Mammary epithelial cell (primary cell): ENCODE measurements at regions of chr2 and their contacts with region 1.

Region 1: GRCh38 chr2:237744613-237745249 is 53.8 kb upstream of the RBM44 start:
- DNase-seq: peak; percentile 32
- H3K4me3 ChIP-seq: no peak overlapping the region
- H3K27ac ChIP-seq: no peak overlapping the region
- H3K4me1 ChIP-seq: no peaks in the 10 kb centered on the region
- H3K27me3 ChIP-seq: no peaks in the 10 kb centered on the region
- CTCF ChIP-seq: peak; percentile 94 to 98

Region 2: GRCh38 chr2:237322564-237322963 is 422.2 kb before region 1 on chr2:
- CTCF ChIA-PET with region 1: no interaction called
- dilution Hi-C with region 1: no loop called
- in situ Hi-C with region 1: no loop called
- intact Hi-C with region 1: no loop called
- DNase-seq: no peak
- H3K4me3 ChIP-seq: no peak overlapping the region
- H3K27ac ChIP-seq: no peak overlapping the region
- H3K4me1 ChIP-seq: no peaks in the 10 kb centered on the region
- H3K27me3 ChIP-seq: no peaks in the 10 kb centered on the region
- CTCF ChIP-seq: peak; percentile 78

Region 3: DNA sequence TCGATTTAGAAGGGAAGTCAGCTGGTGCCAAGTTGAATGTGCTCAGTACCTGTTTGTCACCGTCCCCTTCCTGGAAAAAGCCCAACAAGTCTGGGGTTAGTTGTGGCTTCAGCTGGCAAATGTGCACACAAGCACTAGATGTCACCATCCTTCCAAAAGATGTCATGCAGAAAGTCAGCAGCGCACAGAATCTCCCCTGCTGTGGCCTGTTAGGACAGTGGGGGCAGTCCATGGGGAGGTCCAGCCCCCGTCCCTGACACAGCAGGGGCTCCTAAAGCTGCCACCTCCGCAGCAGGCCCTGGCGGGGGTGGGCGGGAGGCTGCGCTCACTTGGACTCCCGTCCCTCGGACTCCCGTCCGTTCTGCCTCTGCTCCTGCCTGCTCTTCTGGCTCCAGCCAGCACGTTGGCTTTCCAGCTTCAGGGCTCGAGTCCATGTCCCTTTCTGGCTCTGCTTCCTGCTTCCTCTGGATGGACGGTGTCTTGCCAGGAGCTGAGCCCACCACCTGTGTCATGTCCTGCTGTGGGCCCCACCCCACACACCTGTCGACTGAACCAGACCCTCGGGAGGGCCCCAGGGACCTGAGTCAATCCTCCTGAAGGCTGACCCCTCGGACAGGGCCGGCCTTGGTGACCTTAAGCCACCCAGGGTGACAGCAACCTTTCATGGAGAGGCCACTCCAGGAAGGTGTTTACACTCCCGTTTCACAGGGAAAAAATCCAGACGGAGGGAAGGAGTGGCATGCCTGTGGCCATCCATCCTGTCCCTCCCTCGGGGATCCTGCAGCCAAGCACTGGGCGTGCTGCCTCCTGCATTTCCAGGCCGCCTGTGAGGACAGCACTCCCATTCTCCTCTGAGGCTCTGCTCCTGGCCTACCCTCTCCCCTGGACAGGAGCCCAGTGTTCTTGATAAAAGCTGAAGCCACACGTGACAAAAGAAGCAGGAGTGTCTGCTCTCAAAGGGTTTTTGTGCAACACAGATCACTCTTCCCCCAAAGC is 162.7 kb before region 1 on chr2:
- CTCF ChIA-PET with region 1: no interaction called
- dilution Hi-C with region 1: no loop called
- in situ Hi-C with region 1: loop called in 1 of 2 experiments (anchors 25 kb)
- intact Hi-C with region 1: no loop called
- DNase-seq: no peak
- H3K4me3 ChIP-seq: no peak overlapping the region
- H3K27ac ChIP-seq: no peak overlapping the region
- H3K4me1 ChIP-seq: peaks cover 9% of the 10 kb centered on the region
- H3K27me3 ChIP-seq: no peaks in the 10 kb centered on the region
- CTCF ChIP-seq: peak in 1 of 2 donors; percentile 44